Mammary epithelial cell (primary cell): ENCODE measurements at regions of chr11 and their contacts with region 1.

Region 1: GRCh38 chr11:64088162-64089026 is 52.7 kb downstream of the FLRT1 start:
- DNase-seq: no peak
- H3K4me3 ChIP-seq: no peak overlapping the region
- H3K27ac ChIP-seq: no peak overlapping the region
- H3K4me1 ChIP-seq: peaks cover 6% of the 10 kb centered on the region
- H3K27me3 ChIP-seq: no peaks in the 10 kb centered on the region
- CTCF ChIP-seq: peak; percentile 21 to 52

Region 2: GRCh38 chr11:63671322-63672155 is 416.9 kb before region 1 on chr11 and contains the start of gene ATL3:
- CTCF ChIA-PET with region 1: no interaction called
- dilution Hi-C with region 1: no loop called
- in situ Hi-C with region 1: no loop called
- intact Hi-C with region 1: no loop called
- DNase-seq: peak; percentile 95
- H3K4me3 ChIP-seq: peak within 1 kb of the TSS; percentile 80 to 90 (median 81)
- H3K27ac ChIP-seq: peak within 1 kb of the TSS; percentile 95
- H3K4me1 ChIP-seq: peaks cover 38% of the 10 kb centered on the region
- H3K27me3 ChIP-seq: no peaks in the 10 kb centered on the region
- CTCF ChIP-seq: peak in 1 of 2 donors; percentile 24
- total RNA-seq, gene ATL3: 63.7 to 163 TPM

Region 3: DNA sequence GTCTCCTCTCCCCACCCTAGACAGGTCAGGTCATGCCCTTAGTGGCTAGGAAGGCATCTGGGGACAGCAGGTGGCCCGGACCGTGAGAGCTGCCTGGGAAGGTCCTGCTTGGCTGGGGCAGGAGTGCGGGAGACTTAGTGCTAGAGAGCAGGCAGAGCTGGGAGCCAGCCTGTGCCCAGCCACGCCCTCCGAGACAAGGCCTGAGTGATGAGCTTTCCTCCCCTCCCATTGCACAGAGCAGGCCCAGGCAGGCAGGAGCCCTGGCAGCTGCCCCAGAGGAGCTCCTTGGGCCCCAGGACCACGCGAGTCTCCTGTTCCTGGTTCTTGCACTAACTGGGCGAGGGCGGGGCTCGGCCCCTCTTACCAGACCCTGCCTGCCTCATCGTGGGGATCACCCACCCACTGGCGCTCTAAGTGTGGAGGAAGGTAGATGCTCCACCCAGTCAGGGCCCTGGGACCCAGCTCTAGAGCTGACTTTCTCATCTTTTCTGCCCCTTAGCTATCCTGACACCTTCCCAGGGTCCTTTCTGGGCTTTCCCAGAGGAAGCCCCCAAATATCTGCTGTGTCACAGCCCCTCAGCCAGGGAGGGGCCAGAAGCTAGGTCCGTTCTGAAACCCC is 32.7 kb after region 1 on chr11:
- CTCF ChIA-PET with region 1: no interaction called
- dilution Hi-C with region 1: no loop called
- in situ Hi-C with region 1: no loop called
- intact Hi-C with region 1: loop called (anchors 1 kb)
- DNase-seq: peak; percentile 88
- H3K4me3 ChIP-seq: peak overlapping the region in 1 of 3 experiments; percentile 8
- H3K27ac ChIP-seq: peak overlapping the region; percentile 54
- H3K4me1 ChIP-seq: peaks cover 23% of the 10 kb centered on the region
- H3K27me3 ChIP-seq: no peaks in the 10 kb centered on the region
- CTCF ChIP-seq: no peak